ENCODE measurements at regions of chr5 and their contacts with region 1.

Region 1: GRCh38 chr5:40904205-40904993 is 4.9 kb upstream of the C7 start:
- H3K4me3 ChIP-seq: no peak overlapping the region
- H3K27ac ChIP-seq: no peak overlapping the region
- H3K4me1 ChIP-seq: no peaks in the 10 kb centered on the region
- CTCF ChIP-seq: peak; percentile 71; the same call in 1 of the 2 replicates

Region 2: GRCh38 chr5:40914835-40915234 is 10.4 kb after region 1 on chr5:
- CTCF ChIA-PET with region 1: interaction called, 12 read pairs
- POLR2A ChIA-PET with region 1: no interaction called
- H3K4me3 ChIP-seq: no peak overlapping the region
- H3K27ac ChIP-seq: no peak overlapping the region
- H3K4me1 ChIP-seq: no peaks in the 10 kb centered on the region
- CTCF ChIP-seq: no peak

Region 3: GRCh38 chr5:40999142-40999541 is 94.7 kb after region 1 on chr5:
- CTCF ChIA-PET with region 1: no interaction called
- POLR2A ChIA-PET with region 1: no interaction called
- H3K4me3 ChIP-seq: no peak overlapping the region
- H3K27ac ChIP-seq: no peak overlapping the region
- H3K4me1 ChIP-seq: no peaks in the 10 kb centered on the region
- CTCF ChIP-seq: no peak